Cardiac septum (tissue), 1 donor: ENCODE measurements at regions of chr11 and their contacts with region 1.

Region 1: DNA sequence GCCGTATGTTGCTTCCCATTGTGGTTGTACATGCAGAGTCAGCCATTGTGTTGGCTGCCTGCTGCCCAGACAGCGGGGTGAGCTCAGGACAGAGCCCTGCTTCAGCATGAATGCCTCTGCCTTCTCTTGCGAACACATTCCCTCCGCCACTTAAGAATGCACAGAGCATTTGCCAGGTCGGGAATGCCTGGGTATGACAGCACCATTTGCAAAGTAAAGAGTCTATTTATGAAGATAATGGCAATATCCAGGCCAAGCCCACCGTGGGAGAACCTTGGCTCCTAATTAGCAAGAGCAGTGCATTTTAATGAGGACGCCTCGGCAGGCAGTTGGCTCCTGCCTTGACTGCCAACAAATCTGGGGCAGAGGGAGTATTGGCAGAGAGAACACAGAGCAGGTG is 62.5 kb upstream of the SORL1 start:
- DNase-seq: peak; percentile 81

Region 2: DNA sequence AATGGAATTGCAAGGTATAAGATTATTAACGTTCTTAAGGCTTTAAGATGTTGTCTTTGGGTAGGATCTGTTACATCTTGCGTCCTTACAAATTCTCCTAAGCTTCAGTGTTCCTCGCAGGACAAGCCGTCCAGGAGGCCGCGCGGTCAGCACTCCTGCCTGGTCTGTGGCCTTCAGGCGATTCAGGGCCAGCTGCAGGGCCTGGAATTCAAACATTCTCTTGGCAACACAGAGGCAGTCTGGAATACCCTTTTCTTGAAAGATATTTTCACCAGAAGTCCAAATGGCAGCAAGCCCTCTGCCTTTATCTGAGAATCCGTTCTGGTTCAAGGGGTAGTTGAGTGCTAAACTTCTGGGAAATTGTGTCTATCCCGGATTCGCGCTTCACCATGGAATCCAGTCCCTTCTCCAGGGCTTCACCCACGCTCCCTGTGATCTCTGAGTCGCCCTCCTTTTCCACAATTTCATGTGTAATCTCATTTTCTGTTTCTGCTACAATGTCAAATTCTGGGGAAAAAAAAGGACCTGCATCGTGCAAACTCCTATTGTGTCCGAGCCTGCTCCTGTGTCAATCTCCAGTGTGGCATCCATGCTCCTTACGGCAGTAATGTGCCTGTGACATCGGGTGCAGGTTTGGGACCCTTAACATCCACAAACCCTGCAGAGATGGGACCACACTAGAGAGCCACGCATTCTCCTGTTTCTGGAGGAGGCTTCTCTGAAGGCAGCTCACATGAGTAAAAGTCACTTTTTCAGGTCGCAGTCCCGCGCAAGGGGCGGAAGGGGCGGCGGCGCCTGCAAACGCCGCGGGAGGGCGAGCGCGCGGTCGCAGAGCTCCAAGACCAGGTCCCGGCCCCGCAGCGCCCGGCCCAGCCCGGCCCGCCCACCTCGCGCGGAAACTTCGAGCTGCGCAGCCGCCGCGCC is 37.1 kb after region 1 on chr11:
- intact Hi-C with region 1: loop called (anchors 5 kb)
- DNase-seq: peak; percentile 85

Region 3: DNA sequence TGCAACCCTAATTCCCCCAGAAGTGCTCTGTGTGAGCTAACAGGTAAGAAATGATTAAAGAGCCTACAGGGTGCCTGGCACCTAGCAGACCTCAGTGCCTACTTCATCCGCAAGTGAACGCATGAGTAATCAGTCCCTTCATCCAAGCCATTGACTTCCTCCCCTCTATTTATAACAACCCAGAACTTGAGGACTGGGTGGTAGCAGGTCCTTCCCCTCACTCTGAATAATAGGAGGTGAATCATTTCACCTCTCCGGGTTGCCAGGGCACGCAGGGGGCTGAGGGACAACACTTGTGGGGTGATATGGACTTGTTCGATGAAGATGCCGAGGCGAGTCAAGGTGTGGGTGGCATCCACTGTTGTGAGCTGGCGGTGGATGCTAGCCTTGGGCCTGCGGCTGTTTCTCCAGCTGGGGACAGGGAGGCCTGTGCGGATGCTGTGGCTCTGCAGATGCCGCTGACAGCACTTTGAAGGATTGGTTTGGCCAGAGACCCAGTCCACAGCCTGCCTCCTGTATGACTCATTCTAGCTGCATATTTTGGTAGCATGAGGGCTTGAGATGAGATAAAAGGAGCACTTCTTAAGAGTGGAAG is 74.8 kb after region 1 on chr11:
- intact Hi-C with region 1: loop called (anchors 10 kb)
- DNase-seq: peak; percentile 86